ENCODE measurements at regions of chr10 and their contacts with region 1.

Region 1: GRCh38 chr10:74150204-74151055 is at the start of gene AP3M1:
- DNase-seq: peak in 1 of 2 donors; percentile 90
- H3K4me3 ChIP-seq: peak within 1 kb of the TSS; percentile 68 to 88
- H3K27ac ChIP-seq: peak within 1 kb of the TSS; percentile 82
- H3K4me1 ChIP-seq: peaks cover 57% of the 10 kb centered on the region
- H3K27me3 ChIP-seq: no peaks in the 10 kb centered on the region
- CTCF ChIP-seq: no peak
- POLR2A ChIP-seq: no peak
- total RNA-seq, gene AP3M1: 19.6 TPM

Region 2: GRCh38 chr10:74134240-74134820 is 16.1 kb before region 1 on chr10:
- intact Hi-C with region 1: no loop called
- DNase-seq: no peak
- H3K4me3 ChIP-seq: no peak overlapping the region
- H3K27ac ChIP-seq: no peak overlapping the region
- H3K4me1 ChIP-seq: no peaks in the 10 kb centered on the region
- H3K27me3 ChIP-seq: no peaks in the 10 kb centered on the region
- CTCF ChIP-seq: no peak
- POLR2A ChIP-seq: no peak

Region 3: GRCh38 chr10:74175510-74176379 is 25.3 kb after region 1 on chr10:
- intact Hi-C with region 1: loop called (anchors 1 kb)
- DNase-seq: no peak
- H3K4me3 ChIP-seq: peak overlapping the region; percentile 51 to 70
- H3K27ac ChIP-seq: peak overlapping the region; percentile 83
- H3K4me1 ChIP-seq: peaks cover 22% of the 10 kb centered on the region
- H3K27me3 ChIP-seq: no peaks in the 10 kb centered on the region
- CTCF ChIP-seq: no peak
- POLR2A ChIP-seq: no peak